ENCODE measurements at regions of chr16 and their contacts with region 1.

Region 1: GRCh38 chr16:30065143-30065850 is at the start of gene ALDOA:
- DNase-seq: peak; percentile 97
- CTCF ChIP-seq: no peak

Region 2: DNA sequence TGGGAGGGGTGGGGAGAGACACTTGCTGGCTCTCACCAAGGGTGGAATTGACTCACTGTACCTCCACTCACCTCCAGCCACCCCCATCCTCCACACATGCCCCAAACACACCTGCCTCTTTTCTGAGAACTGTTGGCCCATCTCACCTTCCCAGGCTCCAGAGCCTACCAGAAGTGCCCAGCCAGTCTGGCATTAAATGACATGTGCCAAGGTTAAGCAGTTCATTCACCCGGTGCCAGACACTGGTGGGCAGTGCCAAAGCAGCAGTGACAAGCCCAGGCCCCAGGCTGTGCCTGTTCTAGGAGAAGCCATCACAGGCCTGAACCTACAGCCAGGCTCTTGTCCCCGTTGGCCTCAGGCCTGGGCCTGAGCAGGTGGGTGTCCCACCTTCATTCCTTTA is 233.8 kb before region 1 on chr16:
- CTCF ChIA-PET with region 1: no interaction called
- POLR2A ChIA-PET with region 1: no interaction called
- DNase-seq: no peak
- CTCF ChIP-seq: no peak

Region 3: GRCh38 chr16:30075507-30076275 is 10.4 kb after region 1 on chr16 and contains the start of gene PPP4C:
- CTCF ChIA-PET with region 1: interaction called, 7 read pairs
- POLR2A ChIA-PET with region 1: interaction called, 11 read pairs
- DNase-seq: peak; percentile 94
- CTCF ChIP-seq: no peak